Aorta (tissue), 5 donors: ENCODE measurements at regions of chr10 and their contacts with region 1.

Region 1: GRCh38 chr10:77756319-77757232 is 119.0 kb upstream of the KCNMA1 start:
- DNase-seq: no peak
- ATAC-seq: no peak
- H3K4me3 ChIP-seq: no peak overlapping the region
- H3K27ac ChIP-seq: no peak overlapping the region
- H3K4me1 ChIP-seq: no peaks in the 10 kb centered on the region
- H3K27me3 ChIP-seq: no peaks in the 10 kb centered on the region

Region 2: DNA sequence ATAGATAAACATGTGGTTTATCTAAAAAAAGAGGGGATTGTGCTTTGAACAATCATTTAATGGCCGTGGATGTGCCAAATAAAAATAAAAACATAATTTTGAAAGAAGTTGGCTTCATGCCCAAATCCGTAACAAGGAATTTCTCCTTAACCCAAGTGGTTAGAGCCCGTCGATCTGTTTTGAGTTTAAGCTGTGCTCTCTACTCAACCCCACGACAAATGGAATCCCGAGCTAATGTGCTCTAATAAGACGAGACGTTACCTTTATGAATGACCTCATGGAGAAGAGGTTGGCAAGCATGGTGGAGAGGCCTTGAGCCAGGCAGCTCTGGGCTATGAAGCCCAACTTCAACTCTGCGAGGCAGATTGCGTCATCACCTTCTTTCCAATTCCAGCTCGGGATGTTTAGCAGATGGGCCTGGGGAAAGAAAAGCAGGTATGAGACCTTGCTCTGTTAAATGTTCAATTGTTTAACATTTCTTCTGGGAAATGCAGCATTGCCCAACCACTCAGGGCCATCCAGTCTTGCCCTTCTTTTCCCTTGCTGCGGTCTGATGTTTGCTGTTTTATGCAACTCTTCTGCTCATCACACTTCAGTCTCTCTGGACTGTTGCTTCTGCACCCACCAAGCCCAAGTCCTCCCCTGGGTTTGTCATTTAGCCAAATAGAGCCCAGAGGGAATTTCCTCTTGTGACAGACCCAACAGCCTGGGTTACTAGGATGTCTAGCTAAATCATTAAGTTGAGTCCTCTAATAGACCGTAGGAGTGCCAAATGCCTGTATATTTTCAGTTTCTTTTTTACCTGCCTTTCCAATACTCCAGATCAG is 683.5 kb before region 1 on chr10:
- intact Hi-C with region 1: no loop called
- DNase-seq: peak in 1 of 2 donors; percentile 61
- ATAC-seq: peak; percentile 37
- H3K4me3 ChIP-seq: no peak overlapping the region
- H3K27ac ChIP-seq: no peak overlapping the region
- H3K4me1 ChIP-seq: peaks cover 0 to 6% of the 10 kb centered on the region in 2 donors
- H3K27me3 ChIP-seq: no peaks in the 10 kb centered on the region

Region 3: GRCh38 chr10:77718957-77719356 is 37.6 kb before region 1 on chr10:
- intact Hi-C with region 1: loop called (anchors 2 to 5 kb)
- DNase-seq: no peak
- ATAC-seq: no peak
- H3K4me3 ChIP-seq: no peak overlapping the region
- H3K27ac ChIP-seq: no peak overlapping the region
- H3K4me1 ChIP-seq: no peaks in the 10 kb centered on the region
- H3K27me3 ChIP-seq: no peaks in the 10 kb centered on the region

Region 4: DNA sequence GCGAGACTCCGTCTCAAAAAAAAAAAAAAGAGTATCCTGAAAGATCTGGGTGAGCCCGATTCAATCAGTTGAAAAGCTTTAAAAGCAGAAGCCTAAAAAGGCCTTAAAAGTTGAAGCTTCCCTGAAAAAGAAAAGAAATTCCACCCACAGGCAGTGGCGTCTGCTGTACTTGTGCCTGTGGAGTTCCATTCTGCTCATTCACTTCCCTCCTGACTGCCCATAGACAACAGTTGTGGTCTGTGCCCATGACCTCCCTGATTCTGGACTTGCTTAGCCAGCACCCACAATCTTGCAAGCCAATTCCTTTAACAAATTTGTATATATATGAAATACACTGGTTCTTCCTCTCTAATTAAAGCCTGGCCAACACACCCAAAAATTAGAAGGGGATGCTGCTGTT is 28.3 kb after region 1 on chr10:
- intact Hi-C with region 1: no loop called
- DNase-seq: no peak
- ATAC-seq: no peak
- H3K4me3 ChIP-seq: no peak overlapping the region
- H3K27ac ChIP-seq: no peak overlapping the region
- H3K4me1 ChIP-seq: no peaks in the 10 kb centered on the region
- H3K27me3 ChIP-seq: no peaks in the 10 kb centered on the region